ENCODE measurements at regions of chr5 and their contacts with region 1.

Region 1: GRCh38 chr5:78234804-78235203 is 59.7 kb downstream of the AP3B1 start:
- DNase-seq: no peak
- H3K4me3 ChIP-seq: no peak overlapping the region
- H3K27ac ChIP-seq: no peak overlapping the region
- H3K4me1 ChIP-seq: no peaks in the 10 kb centered on the region
- H3K27me3 ChIP-seq: no peaks in the 10 kb centered on the region
- CTCF ChIP-seq: no peak
- POLR2A ChIP-seq: no peak

Region 2: DNA sequence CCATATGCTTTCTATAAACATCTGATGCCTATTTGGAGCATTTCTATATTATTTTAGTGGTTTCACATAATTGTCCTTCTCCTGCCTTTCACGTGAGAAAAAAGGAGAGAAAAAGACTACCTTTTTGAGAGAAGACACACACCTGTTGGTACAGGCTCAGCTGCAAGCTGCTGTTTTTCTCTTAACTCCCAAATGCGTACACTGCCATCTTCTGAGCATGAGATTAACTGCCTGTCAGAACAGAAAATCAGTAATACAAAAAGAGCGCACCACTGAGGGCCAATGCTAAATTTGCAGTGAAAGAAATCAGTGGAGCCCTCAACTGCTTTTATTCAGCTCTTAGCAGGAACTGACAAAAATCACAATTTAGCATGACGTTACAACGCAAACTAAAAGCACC is 797.6 kb before region 1 on chr5:
- intact Hi-C with region 1: no loop called
- DNase-seq: no peak
- H3K4me3 ChIP-seq: no peak overlapping the region
- H3K27ac ChIP-seq: no peak overlapping the region
- H3K4me1 ChIP-seq: no peaks in the 10 kb centered on the region
- H3K27me3 ChIP-seq: no peaks in the 10 kb centered on the region
- CTCF ChIP-seq: no peak
- POLR2A ChIP-seq: no peak

Region 3: GRCh38 chr5:78190402-78190801 is 44.4 kb before region 1 on chr5:
- intact Hi-C with region 1: no loop called
- DNase-seq: no peak
- H3K4me3 ChIP-seq: no peak overlapping the region
- H3K27ac ChIP-seq: no peak overlapping the region
- H3K4me1 ChIP-seq: no peaks in the 10 kb centered on the region
- H3K27me3 ChIP-seq: no peaks in the 10 kb centered on the region
- CTCF ChIP-seq: no peak
- POLR2A ChIP-seq: no peak

Region 4: GRCh38 chr5:78221964-78222451 is 12.8 kb before region 1 on chr5:
- intact Hi-C with region 1: loop called (anchors 1 kb)
- DNase-seq: no peak
- H3K4me3 ChIP-seq: no peak overlapping the region
- H3K27ac ChIP-seq: no peak overlapping the region
- H3K4me1 ChIP-seq: no peaks in the 10 kb centered on the region
- H3K27me3 ChIP-seq: no peaks in the 10 kb centered on the region
- CTCF ChIP-seq: no peak
- POLR2A ChIP-seq: no peak

Measured in breast epithelium (tissue), 4 donors.